Caco-2 (cell line): ENCODE measurements at regions of chrX and their contacts with region 1.

Region 1: DNA sequence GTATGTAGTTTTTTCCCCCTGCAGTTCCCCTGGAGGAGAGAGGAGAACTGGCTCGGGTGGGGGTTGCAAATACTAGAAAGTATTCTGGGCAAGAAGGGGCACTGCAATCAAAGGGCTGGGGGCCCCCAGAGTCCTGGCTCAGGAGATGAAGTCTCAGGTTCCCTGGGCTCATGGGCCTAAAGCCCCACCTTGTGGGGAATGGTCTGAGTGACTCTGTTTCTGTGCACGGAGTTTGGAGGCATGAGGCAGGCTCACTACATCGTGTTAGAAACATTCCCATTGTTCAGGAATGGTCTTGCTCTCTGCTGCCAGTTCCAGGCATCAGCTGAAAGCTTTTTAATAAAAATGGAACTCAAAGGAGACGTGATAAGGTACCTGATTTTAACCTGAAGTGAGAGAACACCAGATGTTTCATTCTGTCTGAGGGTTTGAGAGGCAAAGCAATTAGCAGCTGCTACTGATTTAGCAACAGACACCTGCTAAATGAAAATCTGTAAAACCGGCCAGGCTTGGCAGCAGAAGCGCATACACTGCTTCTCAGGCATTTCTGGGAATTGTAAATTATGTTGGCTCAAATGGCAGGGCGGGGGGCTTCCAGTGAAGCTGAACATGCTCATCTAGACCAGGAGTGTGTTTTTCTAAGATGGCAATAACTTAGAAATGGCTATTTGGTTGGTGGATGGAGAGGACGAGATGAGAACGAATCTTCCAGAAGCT is 122.7 kb downstream of the TMEM164 start:
- DNase-seq: peak in 1 of 2 experiments; percentile 30
- H3K4me3 ChIP-seq: no peak overlapping the region
- H3K4me3 Mint-ChIP-seq: no peak overlapping the region
- H3K27ac Mint-ChIP-seq: no peak overlapping the region
- H3K4me1 ChIP-seq: peaks cover 15% of the 10 kb centered on the region; the same call in 1 of the 2 replicates
- H3K4me1 Mint-ChIP-seq: peaks cover 14% of the 10 kb centered on the region
- H3K27me3 ChIP-seq: no peaks in the 10 kb centered on the region
- H3K27me3 Mint-ChIP-seq: no peaks in the 10 kb centered on the region
- CTCF ChIP-seq: peak; percentile 37 to 41

Region 2: GRCh38 chrX:109782994-109783700 is 342.5 kb before region 1 on chrX:
- CTCF ChIA-PET with region 1: no interaction called
- POLR2A ChIA-PET with region 1: no interaction called
- intact Hi-C with region 1: no loop called
- DNase-seq: no peak
- H3K4me3 ChIP-seq: no peak overlapping the region
- H3K4me3 Mint-ChIP-seq: no peak overlapping the region
- H3K27ac Mint-ChIP-seq: no peak overlapping the region
- H3K4me1 ChIP-seq: no peaks in the 10 kb centered on the region
- H3K4me1 Mint-ChIP-seq: no peaks in the 10 kb centered on the region
- H3K27me3 ChIP-seq: no peaks in the 10 kb centered on the region
- H3K27me3 Mint-ChIP-seq: no peaks in the 10 kb centered on the region
- CTCF ChIP-seq: no peak

Region 3: GRCh38 chrX:110002300-110003166 is 123.1 kb before region 1 on chrX and contains the start of gene TMEM164:
- CTCF ChIA-PET with region 1: no interaction called
- POLR2A ChIA-PET with region 1: no interaction called
- intact Hi-C with region 1: loop called (anchors 1 kb)
- DNase-seq: peak; percentile 76 to 79
- H3K4me3 ChIP-seq: peak within 1 kb of the TSS; percentile 77
- H3K4me3 Mint-ChIP-seq: peak within 1 kb of the TSS; percentile 97
- H3K27ac Mint-ChIP-seq: peak within 1 kb of the TSS; percentile 84
- H3K4me1 ChIP-seq: no peaks in the 10 kb centered on the region
- H3K4me1 Mint-ChIP-seq: peaks cover 7% of the 10 kb centered on the region
- H3K27me3 ChIP-seq: no peaks in the 10 kb centered on the region
- H3K27me3 Mint-ChIP-seq: no peaks in the 10 kb centered on the region
- CTCF ChIP-seq: no peak
- total RNA-seq, gene TMEM164: 25.6 and 26.2 TPM in 2 replicates

Region 4: GRCh38 chrX:110036162-110037033 is 89.2 kb before region 1 on chrX:
- CTCF ChIA-PET with region 1: no interaction called
- POLR2A ChIA-PET with region 1: no interaction called
- intact Hi-C with region 1: loop called (anchors 1 kb)
- DNase-seq: peak; percentile 60 to 66
- H3K4me3 ChIP-seq: no peak overlapping the region
- H3K4me3 Mint-ChIP-seq: peak overlapping the region; percentile 31
- H3K27ac Mint-ChIP-seq: peak overlapping the region; percentile 44
- H3K4me1 ChIP-seq: peaks cover 17% of the 10 kb centered on the region
- H3K4me1 Mint-ChIP-seq: peaks cover 20% of the 10 kb centered on the region
- H3K27me3 ChIP-seq: no peaks in the 10 kb centered on the region
- H3K27me3 Mint-ChIP-seq: no peaks in the 10 kb centered on the region
- CTCF ChIP-seq: no peak

Region 5: DNA sequence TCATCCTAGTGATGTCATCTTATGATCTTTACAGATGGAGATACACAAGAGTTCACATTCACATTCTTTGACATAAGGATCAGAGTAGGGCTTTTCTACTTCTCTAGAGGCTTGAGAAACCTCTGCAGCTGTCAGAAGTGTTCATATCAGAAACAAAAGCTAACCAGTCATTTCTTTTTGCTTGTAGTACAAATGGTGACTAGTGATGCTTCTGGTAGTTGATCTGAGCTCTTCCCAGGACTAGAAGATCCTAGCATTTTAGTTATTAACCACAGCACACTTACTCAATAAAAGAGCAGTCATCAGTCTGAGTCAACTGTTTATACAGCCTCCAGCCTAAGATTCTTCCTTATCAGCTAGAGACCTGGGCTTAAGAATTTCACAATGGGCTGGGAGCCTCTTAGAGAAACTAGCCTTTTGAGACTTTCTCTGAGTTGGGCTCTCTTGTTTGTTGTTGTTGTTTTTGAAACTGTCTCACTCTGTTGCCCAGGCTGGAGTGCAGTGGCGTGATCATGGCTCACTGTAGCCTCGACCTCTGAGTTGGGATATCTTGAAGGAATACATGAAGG is 38.6 kb before region 1 on chrX:
- CTCF ChIA-PET with region 1: no interaction called
- POLR2A ChIA-PET with region 1: no interaction called
- intact Hi-C with region 1: loop called (anchors 1 kb)
- DNase-seq: peak in 1 of 2 experiments; percentile 33
- H3K4me3 ChIP-seq: no peak overlapping the region
- H3K4me3 Mint-ChIP-seq: no peak overlapping the region
- H3K27ac Mint-ChIP-seq: peak overlapping the region; percentile 36
- H3K4me1 ChIP-seq: peaks cover 23% of the 10 kb centered on the region
- H3K4me1 Mint-ChIP-seq: no peaks in the 10 kb centered on the region
- H3K27me3 ChIP-seq: no peaks in the 10 kb centered on the region
- H3K27me3 Mint-ChIP-seq: no peaks in the 10 kb centered on the region
- CTCF ChIP-seq: no peak

Region 6: GRCh38 chrX:110219920-110220319 is 94.3 kb after region 1 on chrX:
- CTCF ChIA-PET with region 1: no interaction called
- POLR2A ChIA-PET with region 1: no interaction called
- intact Hi-C with region 1: no loop called
- DNase-seq: no peak
- H3K4me3 ChIP-seq: no peak overlapping the region
- H3K4me3 Mint-ChIP-seq: no peak overlapping the region
- H3K27ac Mint-ChIP-seq: no peak overlapping the region
- H3K4me1 ChIP-seq: peaks cover 13% of the 10 kb centered on the region
- H3K4me1 Mint-ChIP-seq: no peaks in the 10 kb centered on the region
- H3K27me3 ChIP-seq: no peaks in the 10 kb centered on the region
- H3K27me3 Mint-ChIP-seq: no peaks in the 10 kb centered on the region
- CTCF ChIP-seq: no peak